OCI-LY7 (cell line): ENCODE measurements at regions of chr16 and their contacts with region 1.

Region 1: DNA sequence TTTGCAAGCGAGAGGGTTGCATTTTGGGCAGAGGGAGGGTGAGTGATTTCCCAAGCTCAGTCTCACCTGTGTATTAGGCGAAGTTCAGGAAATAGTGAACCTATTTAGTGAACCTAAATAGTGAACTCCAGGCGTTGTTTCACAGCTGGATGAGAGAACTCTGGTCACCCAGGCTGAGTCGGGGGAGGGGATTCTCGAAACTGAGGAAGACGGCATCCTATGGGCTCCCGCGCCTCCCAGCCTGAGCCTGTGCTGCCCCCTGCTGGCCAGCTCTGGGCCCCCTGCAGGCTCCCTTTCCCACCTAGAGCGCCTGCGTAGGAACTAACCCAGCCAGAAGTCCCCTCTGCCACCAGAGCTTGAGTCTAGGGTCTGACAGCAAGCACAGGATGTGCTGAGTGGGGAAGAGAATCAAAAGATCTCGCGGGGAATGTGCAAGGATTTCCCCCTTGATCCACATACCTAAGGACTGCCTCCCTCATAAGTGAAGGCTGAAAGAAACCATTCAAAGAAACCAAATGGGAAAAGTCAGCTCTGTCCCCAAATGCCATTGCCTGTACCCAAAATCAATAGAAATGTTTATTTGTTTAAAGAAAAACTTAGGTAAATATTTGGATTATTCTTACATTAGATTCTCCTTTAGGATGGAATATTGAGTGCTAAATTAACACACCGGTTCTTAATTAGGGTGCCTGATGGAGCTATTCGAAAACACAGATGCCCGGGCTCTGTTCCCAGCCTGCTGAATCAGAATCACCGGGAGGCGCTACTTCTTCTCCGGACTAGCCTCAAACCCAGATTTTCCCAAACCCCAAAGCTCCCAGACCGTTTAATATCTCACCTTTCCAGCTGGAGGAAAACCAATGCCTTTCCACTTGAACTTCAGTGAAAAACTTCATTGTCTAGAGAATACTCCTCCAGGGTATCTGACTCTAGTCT is 14.8 kb upstream of the MARVELD3 start:
- DNase-seq: peak; percentile 79
- H3K4me3 ChIP-seq: no peak overlapping the region
- H3K27ac ChIP-seq: no peak overlapping the region
- H3K4me1 ChIP-seq: no peaks in the 10 kb centered on the region
- CTCF ChIP-seq: peak; percentile 80

Region 2: DNA sequence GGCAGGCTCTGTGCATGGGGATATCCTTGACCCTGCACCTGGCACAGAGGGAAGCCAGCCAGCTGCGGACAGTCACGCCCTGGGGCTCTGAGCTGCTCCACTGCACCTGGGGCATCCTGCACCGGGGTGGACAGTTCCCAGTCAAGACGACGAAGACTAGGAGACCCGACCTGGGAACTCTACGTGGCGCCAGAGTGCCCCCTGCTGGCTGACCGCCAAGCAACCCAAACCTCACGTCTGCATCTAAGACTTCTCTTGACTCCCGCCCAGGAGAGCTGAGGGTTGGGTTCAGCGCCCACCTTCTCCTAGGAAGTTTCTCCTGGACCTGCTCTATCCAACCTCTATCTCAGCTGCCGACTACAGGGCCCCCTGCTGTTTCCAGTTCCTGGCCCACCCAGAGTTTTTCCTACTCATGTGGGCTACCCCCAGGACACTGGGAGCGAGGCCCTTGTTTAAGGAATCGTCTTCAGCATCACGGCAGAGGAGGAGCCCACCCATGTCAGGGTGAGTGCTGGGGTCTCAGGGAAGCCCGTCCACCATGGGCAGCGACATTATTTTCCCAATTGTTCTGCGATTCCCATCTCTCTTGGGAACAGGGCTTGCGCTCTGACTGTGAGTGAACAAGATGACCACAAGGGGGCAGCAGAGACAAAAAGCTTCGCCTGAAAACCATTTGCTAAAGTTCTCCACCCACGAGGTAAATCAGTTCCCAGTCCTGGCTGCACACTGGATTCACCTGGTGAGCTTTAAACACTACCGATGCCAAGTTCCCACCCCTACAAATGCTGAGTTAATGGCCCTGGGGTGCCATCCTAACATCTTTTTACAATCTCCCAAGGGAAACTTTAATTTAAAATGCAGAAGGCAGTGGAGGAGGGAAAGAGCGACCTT is 198.7 kb before region 1 on chr16:
- CTCF ChIA-PET with region 1: interaction called, 3 read pairs
- POLR2A ChIA-PET with region 1: interaction called, 4 read pairs
- intact Hi-C with region 1: loop called (anchors 1 kb)
- DNase-seq: peak; percentile 77
- H3K4me3 ChIP-seq: no peak overlapping the region
- H3K27ac ChIP-seq: no peak overlapping the region
- H3K4me1 ChIP-seq: no peaks in the 10 kb centered on the region
- CTCF ChIP-seq: peak; percentile 95; the same call in 1 of the 2 replicates

Region 3: DNA sequence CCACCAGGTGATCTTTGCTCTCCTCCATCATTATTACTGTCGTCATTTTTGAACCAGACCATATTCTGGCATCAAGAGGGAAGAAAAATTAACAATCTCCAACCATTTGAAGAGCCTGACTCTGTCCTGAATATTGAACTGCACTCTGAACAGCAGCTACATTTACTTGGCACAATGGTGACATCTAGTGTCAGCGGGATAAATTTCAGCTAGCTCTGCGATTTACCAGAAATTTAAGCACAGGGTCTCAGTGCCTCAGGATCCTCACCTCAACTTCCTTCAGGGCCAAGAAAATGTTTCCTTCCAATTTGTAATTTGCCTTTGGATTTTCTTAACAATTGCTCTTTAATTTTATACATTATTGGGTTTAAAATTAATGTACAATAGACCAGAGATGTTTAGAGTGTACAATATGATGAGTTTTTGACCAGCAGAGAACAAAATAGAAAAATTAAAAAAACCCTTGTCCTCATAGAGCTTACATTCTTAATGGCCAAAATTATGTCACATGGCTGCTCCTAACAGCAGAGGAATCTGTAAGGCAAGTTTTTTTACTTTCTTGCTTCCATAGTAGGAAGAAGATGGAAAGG is 111.3 kb before region 1 on chr16:
- CTCF ChIA-PET with region 1: interaction called, 7 read pairs
- POLR2A ChIA-PET with region 1: interaction called, 3 read pairs
- intact Hi-C with region 1: loop called (anchors 1 kb)
- DNase-seq: peak; percentile 69
- H3K4me3 ChIP-seq: no peak overlapping the region
- H3K27ac ChIP-seq: no peak overlapping the region
- H3K4me1 ChIP-seq: no peaks in the 10 kb centered on the region
- CTCF ChIP-seq: peak; percentile 93

Region 4: DNA sequence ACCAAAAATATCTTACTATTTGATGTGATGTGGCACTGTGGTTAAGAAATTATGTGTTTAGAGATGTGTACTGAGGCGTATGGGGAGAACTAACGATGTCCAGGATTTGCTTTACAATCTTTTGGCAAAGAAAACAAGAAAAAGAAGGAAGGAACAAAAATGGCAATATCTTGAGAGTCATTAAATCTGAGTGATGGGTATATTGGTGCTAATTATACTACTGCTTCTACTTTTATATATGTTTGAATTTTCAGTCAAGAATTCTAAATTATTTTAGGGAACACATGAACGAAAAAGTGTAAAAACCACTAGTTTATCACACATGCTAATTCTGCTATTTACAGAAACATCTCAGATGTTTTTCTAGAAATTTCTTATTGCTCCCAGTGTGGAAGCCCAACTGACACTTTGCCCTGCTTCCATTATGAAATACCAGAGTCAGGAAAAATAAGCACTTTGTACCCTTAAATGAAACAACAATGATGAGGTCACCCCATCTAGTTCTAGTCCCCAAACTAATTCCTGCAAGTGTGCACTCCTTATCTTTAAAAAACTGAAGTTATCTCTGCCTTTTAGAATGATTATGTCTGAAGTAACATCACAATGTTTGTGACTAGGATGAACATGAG is 53.1 kb before region 1 on chr16:
- CTCF ChIA-PET with region 1: no interaction called
- POLR2A ChIA-PET with region 1: interaction called, 10 read pairs
- intact Hi-C with region 1: no loop called
- DNase-seq: no peak
- H3K4me3 ChIP-seq: no peak overlapping the region
- H3K27ac ChIP-seq: no peak overlapping the region
- H3K4me1 ChIP-seq: no peaks in the 10 kb centered on the region
- CTCF ChIP-seq: no peak

Region 5: GRCh38 chr16:71564155-71564967 is 46.8 kb before region 1 on chr16:
- CTCF ChIA-PET with region 1: interaction called, 28 read pairs
- POLR2A ChIA-PET with region 1: interaction called, 9 read pairs
- intact Hi-C with region 1: loop called (anchors 1 kb)
- DNase-seq: no peak
- H3K4me3 ChIP-seq: peak overlapping the region; percentile 67
- H3K27ac ChIP-seq: peak overlapping the region; percentile 97
- H3K4me1 ChIP-seq: peaks cover 29% of the 10 kb centered on the region
- CTCF ChIP-seq: no peak

Region 6: DNA sequence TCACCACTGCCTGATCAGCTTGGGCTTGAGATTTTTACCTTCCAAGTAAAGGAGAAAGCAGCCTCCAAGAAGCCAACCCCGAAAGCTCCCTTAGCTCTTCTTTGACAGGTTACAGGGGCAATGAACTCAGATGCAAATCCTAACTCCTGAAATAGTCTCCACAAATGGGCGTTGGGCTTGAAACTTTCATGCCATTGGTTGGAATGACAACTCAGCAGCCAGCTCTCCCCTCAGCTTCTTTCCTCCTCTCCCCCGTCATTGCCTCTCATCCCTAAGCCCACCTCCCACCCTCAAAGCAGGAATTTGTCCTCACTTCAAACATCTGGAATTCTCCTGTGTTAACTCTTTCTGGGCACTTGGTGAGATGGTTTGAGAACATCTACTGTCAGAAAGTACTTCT is 34.2 kb before region 1 on chr16 and contains the start of gene TAT:
- CTCF ChIA-PET with region 1: interaction called, 11 read pairs
- POLR2A ChIA-PET with region 1: interaction called, 7 read pairs
- intact Hi-C with region 1: no loop called
- DNase-seq: no peak
- H3K4me3 ChIP-seq: no peak within 1 kb of the TSS
- H3K27ac ChIP-seq: no peak within 1 kb of the TSS
- H3K4me1 ChIP-seq: peaks cover 16% of the 10 kb centered on the region
- CTCF ChIP-seq: no peak
- total RNA-seq, gene TAT: not detected in 2 replicates

Region 7: GRCh38 chr16:71746442-71747046 is 135.3 kb after region 1 on chr16:
- CTCF ChIA-PET with region 1: no interaction called
- POLR2A ChIA-PET with region 1: no interaction called
- intact Hi-C with region 1: loop called (anchors 5 kb)
- DNase-seq: peak; percentile 64
- H3K4me3 ChIP-seq: no peak overlapping the region
- H3K27ac ChIP-seq: no peak overlapping the region
- H3K4me1 ChIP-seq: no peaks in the 10 kb centered on the region
- CTCF ChIP-seq: peak; percentile 96